Tibial artery (tissue), 4 donors: ENCODE measurements at regions of chr19 and their contacts with region 1.

Region 1: GRCh38 chr19:17282488-17283255 is 971 bp downstream of the ANKLE1 start:
- DNase-seq: peak; percentile 76 to 86
- H3K4me3 ChIP-seq: peak overlapping the region in 1 of 2 donors; percentile 41
- H3K27ac ChIP-seq: no peak overlapping the region
- H3K4me1 ChIP-seq: peaks cover 0 to 17% (median 15%) of the 10 kb centered on the region in 4 donors
- H3K27me3 ChIP-seq: peaks cover 4 to 29% of the 10 kb centered on the region in 2 donors
- CTCF ChIP-seq: peak; percentile 91 to 95

Region 2: GRCh38 chr19:17069218-17069617 is 213.5 kb before region 1 on chr19:
- intact Hi-C with region 1: loop called (anchors 2 kb)
- DNase-seq: no peak
- H3K4me3 ChIP-seq: no peak overlapping the region
- H3K27ac ChIP-seq: no peak overlapping the region
- H3K4me1 ChIP-seq: peaks cover 0 to 10% (median 5%) of the 10 kb centered on the region in 4 donors
- H3K27me3 ChIP-seq: no peaks in the 10 kb centered on the region
- CTCF ChIP-seq: no peak

Region 3: GRCh38 chr19:17170538-17171297 is 112.0 kb before region 1 on chr19:
- intact Hi-C with region 1: no loop called
- DNase-seq: no peak
- H3K4me3 ChIP-seq: no peak overlapping the region
- H3K27ac ChIP-seq: no peak overlapping the region
- H3K4me1 ChIP-seq: no peaks in the 10 kb centered on the region
- H3K27me3 ChIP-seq: no peaks in the 10 kb centered on the region
- CTCF ChIP-seq: no peak

Region 4: GRCh38 chr19:17195106-17195505 is 87.6 kb before region 1 on chr19:
- intact Hi-C with region 1: no loop called
- DNase-seq: no peak
- H3K4me3 ChIP-seq: no peak overlapping the region
- H3K27ac ChIP-seq: no peak overlapping the region
- H3K4me1 ChIP-seq: no peaks in the 10 kb centered on the region
- H3K27me3 ChIP-seq: no peaks in the 10 kb centered on the region
- CTCF ChIP-seq: no peak

Region 5: GRCh38 chr19:17205237-17206140 is 77.2 kb before region 1 on chr19:
- intact Hi-C with region 1: loop called (anchors 5 kb)
- DNase-seq: no peak
- H3K4me3 ChIP-seq: no peak overlapping the region
- H3K27ac ChIP-seq: no peak overlapping the region
- H3K4me1 ChIP-seq: no peaks in the 10 kb centered on the region
- H3K27me3 ChIP-seq: no peaks in the 10 kb centered on the region
- CTCF ChIP-seq: peak; percentile 39 to 48